ENCODE measurements at regions of chr16 and their contacts with region 1.

Region 1: DNA sequence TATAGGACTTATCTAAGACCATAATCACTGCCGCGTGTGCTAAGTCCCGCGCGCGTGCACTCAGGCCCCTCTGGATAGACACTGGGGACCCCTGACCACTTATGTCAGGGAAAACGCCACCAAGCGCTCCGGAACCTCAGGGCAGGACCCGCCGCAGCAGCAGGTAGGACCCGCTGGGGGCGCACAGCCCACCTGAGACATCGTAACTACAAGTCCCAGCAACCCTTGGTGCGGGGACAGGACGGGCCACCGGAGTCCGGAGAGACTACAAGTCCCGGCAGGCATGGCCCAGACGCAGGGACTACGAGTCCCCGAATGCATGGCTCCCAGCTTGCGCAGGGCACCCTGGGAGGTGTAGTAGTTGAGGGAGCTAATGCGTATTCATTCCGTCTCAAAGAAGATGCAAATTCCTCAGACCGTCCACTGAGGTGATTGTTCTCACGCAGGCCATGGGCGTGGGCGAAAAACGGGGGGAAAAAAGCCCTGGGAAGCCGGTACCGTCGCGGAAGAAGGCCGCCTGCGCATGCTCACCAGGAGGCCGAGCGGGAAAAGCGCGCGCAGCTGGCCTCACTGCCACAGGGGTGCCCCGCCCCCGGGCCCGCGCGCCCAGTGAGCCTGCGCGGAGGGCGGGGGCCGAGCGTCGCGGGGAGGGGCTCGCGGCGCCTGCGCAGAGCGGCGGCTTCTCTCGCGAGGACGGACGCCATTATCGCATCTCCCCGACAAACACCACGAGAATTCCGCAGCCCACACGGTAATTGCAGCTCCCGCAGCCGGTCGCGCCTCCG is at the start of gene BANP:
- DNase-seq: peak; percentile 98
- H3K4me3 Mint-ChIP-seq: peak within 1 kb of the TSS; percentile 96
- H3K27ac Mint-ChIP-seq: peak within 1 kb of the TSS; percentile 100
- H3K4me1 Mint-ChIP-seq: peaks cover 43% of the 10 kb centered on the region
- H3K27me3 Mint-ChIP-seq: peaks cover 2% of the 10 kb centered on the region
- total RNA-seq, gene BANP: 29.6 to 30.6 TPM

Region 2: GRCh38 chr16:88005181-88005581 is 54.2 kb after region 1 on chr16:
- CTCF ChIA-PET with region 1: no interaction called
- POLR2A ChIA-PET with region 1: no interaction called
- intact Hi-C with region 1: loop called (anchors 10 kb)
- DNase-seq: peak; percentile 28
- H3K4me3 Mint-ChIP-seq: no peak overlapping the region
- H3K27ac Mint-ChIP-seq: no peak overlapping the region
- H3K4me1 Mint-ChIP-seq: peaks cover 6% of the 10 kb centered on the region
- H3K27me3 Mint-ChIP-seq: no peaks in the 10 kb centered on the region